ENCODE measurements at regions of chr12 and their contacts with region 1.

Region 1: DNA sequence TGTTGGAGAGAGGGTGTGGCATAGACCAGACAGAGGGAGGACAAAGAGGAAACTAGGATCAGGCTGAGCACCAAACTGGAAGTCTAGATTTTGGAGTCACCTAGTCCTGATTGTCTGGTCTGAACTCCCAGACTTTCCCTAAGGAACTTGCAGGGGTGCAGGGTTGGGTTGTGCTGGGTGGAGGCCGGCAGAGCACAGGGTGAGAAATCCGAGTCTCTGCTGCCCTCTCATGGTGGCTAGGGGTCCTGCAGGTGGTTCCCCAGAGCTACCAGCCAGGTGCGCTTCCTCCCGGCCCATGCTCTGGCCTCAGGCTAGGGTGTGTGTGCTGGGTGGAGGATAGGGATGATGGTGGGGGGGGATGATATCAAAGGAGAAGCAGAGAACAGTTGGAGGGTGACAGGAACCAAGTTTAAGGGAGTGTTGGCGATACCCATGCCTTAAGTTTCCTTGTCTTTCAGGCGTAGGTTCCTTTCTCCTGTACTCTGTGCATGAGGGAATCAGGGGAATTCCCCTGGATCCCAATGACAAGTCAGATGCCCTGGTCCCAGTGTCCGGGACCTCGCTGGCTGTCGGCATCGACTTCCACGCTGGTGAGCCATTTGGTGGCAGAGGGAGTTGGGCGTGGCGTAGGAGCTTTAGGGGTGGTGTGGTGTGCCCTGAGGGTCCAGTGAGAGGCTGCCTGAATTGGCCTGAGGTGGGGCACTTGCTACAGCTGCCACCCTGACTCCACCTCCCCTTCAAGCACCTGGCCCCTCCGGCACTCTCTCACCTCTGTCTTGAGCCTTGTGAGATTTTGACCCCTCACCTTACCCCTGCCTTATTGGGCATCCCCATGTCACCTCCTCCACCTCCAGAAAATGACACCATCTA is 33.4 kb upstream of the NXPH4 start:
- DNase-seq: peak in 2 of 3 donors; percentile 71 to 74
- ATAC-seq: peak; percentile 82 to 91 (median 84)
- H3K4me3 ChIP-seq: no peak overlapping the region
- H3K27ac ChIP-seq: no peak overlapping the region
- H3K4me1 ChIP-seq: no peaks in the 10 kb centered on the region
- H3K27me3 ChIP-seq: no peaks in the 10 kb centered on the region
- CTCF ChIP-seq: peak; percentile 78 to 87 (median 82)
- POLR2A ChIP-seq: no peak

Region 2: DNA sequence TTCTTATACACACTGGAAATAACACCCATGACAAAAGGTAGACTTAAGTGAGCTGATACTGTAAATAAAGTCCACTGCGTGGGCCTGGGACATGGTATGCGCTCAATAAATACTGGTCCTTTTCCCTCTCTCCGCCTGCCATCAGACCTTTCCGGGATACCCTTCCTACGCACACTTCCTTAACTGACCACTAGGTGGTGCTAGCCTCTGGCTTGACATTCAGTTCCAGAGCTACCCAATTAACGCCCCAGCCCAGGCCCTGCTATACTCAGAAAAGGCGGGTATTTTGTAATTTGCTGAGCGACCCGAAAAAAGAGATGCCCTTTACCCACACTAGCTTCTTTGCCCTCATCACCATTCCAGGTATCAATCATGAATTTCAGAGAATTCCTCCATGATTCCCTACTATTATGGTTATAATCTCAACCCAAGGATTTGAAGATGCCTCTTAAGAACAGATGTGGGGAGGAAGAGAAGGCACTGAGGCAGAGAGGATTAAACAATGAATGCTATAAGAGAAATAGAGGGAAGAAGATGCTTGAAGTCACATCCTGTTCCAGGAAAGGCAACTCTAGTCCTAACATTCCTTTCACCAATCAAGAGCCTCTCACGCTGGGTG is 58.8 kb before region 1 on chr12:
- intact Hi-C with region 1: loop called (anchors 5 kb)
- DNase-seq: peak in 2 of 3 donors; percentile 55 to 77
- ATAC-seq: peak; percentile 39 to 50 (median 44)
- H3K4me3 ChIP-seq: no peak overlapping the region
- H3K27ac ChIP-seq: no peak overlapping the region
- H3K4me1 ChIP-seq: peaks cover 0 to 11% (median 5%) of the 10 kb centered on the region in 4 donors
- H3K27me3 ChIP-seq: no peaks in the 10 kb centered on the region
- CTCF ChIP-seq: peak in 3 of 4 donors; percentile 94 to 98 (median 96)
- POLR2A ChIP-seq: no peak

Region 3: DNA sequence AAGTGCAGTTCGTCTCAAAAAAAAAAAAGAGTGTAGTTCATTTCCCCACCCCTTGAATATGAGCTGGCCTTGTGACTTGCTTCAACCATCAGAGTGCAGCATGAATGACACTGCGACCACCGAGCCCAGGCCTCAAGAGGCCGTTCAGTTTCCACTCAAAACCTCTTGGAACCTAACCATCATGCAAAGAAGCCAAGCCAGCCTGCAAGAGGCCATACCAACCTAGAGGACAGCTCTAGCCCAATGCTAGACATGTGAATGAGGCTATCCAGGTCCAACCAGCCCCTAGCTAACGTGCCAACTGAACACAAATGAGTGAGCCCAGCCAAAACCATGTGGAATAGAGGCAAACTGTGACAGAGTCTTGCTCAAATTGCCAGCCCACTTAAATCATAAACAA is 218.0 kb after region 1 on chr12:
- intact Hi-C with region 1: no loop called
- DNase-seq: no peak
- ATAC-seq: no peak
- H3K4me3 ChIP-seq: no peak overlapping the region
- H3K27ac ChIP-seq: no peak overlapping the region
- H3K4me1 ChIP-seq: no peaks in the 10 kb centered on the region
- H3K27me3 ChIP-seq: no peaks in the 10 kb centered on the region
- CTCF ChIP-seq: no peak
- POLR2A ChIP-seq: no peak

Measured in right lobe of liver (tissue), 6 donors.